Psoas muscle (tissue), 8 donors: ENCODE measurements at regions of chr9 and their contacts with region 1.

Region 1: DNA sequence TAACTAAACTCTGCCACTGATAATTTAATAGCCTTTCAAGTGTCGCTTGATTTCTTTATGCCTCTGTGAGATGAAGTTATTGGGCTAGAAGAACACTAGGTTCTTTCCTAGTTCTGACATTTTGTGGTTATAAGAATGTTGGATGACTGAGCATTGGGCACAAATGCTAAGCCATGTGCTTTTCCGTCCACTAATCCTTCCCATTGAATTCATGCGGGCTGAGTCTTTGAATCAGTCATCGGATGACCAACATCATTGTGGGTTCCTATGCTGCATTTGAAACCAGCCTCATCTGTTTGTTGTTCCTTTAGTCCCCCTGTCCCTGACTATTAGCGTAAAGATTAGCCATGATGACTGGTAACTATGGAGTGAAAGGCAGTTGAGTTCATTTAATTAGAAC is 58.5 kb downstream of the ALDH1A1 start:
- DNase-seq: no peak
- ATAC-seq: no peak
- H3K4me3 ChIP-seq: no peak overlapping the region
- H3K27ac ChIP-seq: no peak overlapping the region
- H3K4me1 ChIP-seq: no peaks in the 10 kb centered on the region
- H3K27me3 ChIP-seq: peaks cover 0 to 2% (median 0%) of the 10 kb centered on the region in 3 donors
- CTCF ChIP-seq: no peak

Region 2: DNA sequence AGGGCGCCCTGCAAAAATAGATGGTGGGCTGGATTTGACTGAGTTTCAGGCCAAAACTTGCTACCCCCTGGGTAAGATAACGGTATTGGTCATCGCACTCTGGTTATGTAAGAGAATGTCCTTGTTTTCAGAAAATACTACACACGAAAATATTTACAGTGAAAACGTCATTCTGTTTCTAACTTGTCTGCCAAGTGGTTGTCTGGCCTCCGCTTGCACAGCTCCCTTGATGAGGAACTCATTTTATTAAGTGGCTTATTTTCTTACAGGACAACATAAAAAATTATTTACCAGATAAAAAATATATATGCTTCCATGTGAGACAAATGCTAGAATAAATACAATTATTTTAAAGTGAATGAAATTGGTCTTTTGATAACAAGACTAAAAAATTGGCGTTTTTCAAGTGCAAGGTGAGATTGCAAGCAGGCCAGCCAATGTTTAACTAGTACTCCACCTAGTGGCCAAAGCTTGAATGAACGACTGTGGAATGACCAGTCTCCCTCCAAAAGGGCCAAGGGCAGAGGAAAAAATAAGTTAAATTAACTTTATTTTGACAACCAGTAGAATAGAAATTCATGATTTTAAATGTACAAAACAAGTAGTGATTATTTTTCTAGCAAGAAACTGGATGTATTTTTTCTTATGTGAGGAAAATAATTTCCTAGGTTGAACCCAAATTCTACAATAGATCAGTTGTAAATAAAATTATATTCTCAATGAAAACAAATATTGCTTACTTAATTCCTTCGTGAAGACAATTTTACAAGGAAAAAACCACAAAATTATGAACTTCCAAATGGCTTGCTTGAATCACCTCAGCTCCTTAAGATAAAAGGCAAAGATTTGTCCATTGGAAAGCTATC is 622.5 kb before region 1 on chr9:
- intact Hi-C with region 1: no loop called
- DNase-seq: no peak
- ATAC-seq: peak in 3 of 4 donors; percentile 60 to 81 (median 62)
- H3K4me3 ChIP-seq: no peak overlapping the region
- H3K27ac ChIP-seq: no peak overlapping the region
- H3K4me1 ChIP-seq: no peaks in the 10 kb centered on the region
- H3K27me3 ChIP-seq: no peaks in the 10 kb centered on the region
- CTCF ChIP-seq: peak; percentile 90

Region 3: GRCh38 chr9:72856972-72857623 is 37.2 kb before region 1 on chr9:
- intact Hi-C with region 1: no loop called
- DNase-seq: no peak
- ATAC-seq: peak in 3 of 4 donors; percentile 53 to 83 (median 67)
- H3K4me3 ChIP-seq: no peak overlapping the region
- H3K27ac ChIP-seq: no peak overlapping the region
- H3K4me1 ChIP-seq: peaks cover 21% of the 10 kb centered on the region
- H3K27me3 ChIP-seq: no peaks in the 10 kb centered on the region
- CTCF ChIP-seq: peak; percentile 64

Region 4: DNA sequence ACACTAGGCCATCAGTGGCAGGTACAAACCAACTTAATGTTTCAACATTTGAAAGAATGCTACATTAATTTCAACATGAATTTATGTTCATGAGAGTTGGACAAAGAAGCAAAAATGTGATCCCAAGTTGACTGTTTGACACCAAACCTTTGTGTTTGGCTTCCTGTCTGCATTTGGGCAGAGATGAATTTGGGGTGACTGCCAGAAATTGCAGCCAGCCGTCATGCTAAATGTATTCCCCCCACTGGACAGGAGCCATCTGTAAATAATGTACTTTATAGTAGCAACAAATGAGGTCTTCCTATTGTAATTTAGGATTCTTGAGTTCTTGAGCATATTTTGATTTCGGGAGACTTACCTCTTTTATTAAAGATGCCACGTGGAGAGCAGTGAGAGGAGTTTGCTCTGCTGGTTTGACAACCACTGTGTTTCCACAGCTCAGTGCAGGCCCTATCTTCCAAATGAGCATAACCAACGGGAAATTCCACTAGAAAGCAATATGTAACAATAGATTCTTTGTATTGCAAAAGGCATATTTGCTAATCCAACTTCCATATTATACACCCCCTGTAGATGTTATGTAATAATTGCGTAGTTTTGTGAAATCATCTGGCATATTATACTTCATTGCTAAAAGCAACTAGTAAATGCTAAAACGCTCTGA is 30.9 kb after region 1 on chr9:
- intact Hi-C with region 1: loop called in 1 of 2 experiments (anchors 5 kb)
- DNase-seq: no peak
- ATAC-seq: no peak
- H3K4me3 ChIP-seq: no peak overlapping the region
- H3K27ac ChIP-seq: no peak overlapping the region
- H3K4me1 ChIP-seq: no peaks in the 10 kb centered on the region
- H3K27me3 ChIP-seq: no peaks in the 10 kb centered on the region
- CTCF ChIP-seq: no peak